GM12878 (cell line): ENCODE measurements at regions of chr16 and their contacts with region 1.

Region 1: DNA sequence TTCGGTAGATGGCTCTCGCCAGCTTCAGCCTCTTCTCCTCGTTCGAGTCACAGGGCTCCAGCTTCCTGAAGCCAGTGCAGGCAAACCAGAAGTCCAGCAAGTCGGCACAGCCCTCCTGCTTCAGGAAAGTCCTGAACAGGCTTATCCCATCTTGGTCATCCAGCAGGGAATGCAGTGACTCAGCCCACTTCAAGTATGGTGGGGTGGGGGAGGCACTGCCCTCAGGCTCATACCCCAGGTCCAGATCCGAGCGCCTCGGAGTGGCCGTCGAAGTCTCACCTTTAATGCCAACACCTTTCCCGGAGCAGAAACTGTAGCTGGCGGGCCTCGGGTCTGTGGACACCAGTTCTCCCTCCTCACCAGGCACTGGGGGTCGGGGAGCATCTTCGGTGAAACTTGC is 5.9 kb downstream of the AXIN1 start:
- DNase-seq: no peak
- ATAC-seq: no peak
- H3K4me3 ChIP-seq: no peak overlapping the region
- H3K27ac ChIP-seq: no peak overlapping the region
- H3K4me1 ChIP-seq: peaks cover 21% of the 10 kb centered on the region
- H3K27me3 ChIP-seq: no peaks in the 10 kb centered on the region
- CTCF ChIP-seq: no peak
- EP300 ChIP-seq: no peak
- POLR2A ChIP-seq: no peak
- RAD21 ChIP-seq: no peak

Region 2: GRCh38 chr16:228818-229730 is 117.5 kb before region 1 on chr16 and contains the start of gene LUC7L:
- CTCF ChIA-PET with region 1: interaction called, 20 read pairs
- POLR2A ChIA-PET with region 1: interaction called, 11 read pairs
- RAD21 ChIA-PET with region 1: interaction called, 28 read pairs
- SMC1A ChIA-PET with region 1: interaction called, 11 read pairs
- in situ Hi-C with region 1: loop called (anchors 5 kb)
- intact Hi-C with region 1: loop called (anchors 2 kb)
- DNase-seq: peak; percentile 40
- ATAC-seq: peak; percentile 97
- H3K4me3 ChIP-seq: peak within 1 kb of the TSS; percentile 82
- H3K27ac ChIP-seq: peak within 1 kb of the TSS; percentile 79
- H3K4me1 ChIP-seq: peaks cover 8% of the 10 kb centered on the region
- H3K27me3 ChIP-seq: no peaks in the 10 kb centered on the region
- CTCF ChIP-seq: no peak
- EP300 ChIP-seq: no peak
- POLR2A ChIP-seq: peak; percentile 100
- RAD21 ChIP-seq: no peak
- polyA plus RNA-seq, gene LUC7L: 2.3 to 10.9 TPM

Region 3: GRCh38 chr16:234468-235305 is 111.9 kb before region 1 on chr16 and contains the start of gene FAM234A:
- CTCF ChIA-PET with region 1: interaction called, 20 read pairs
- POLR2A ChIA-PET with region 1: interaction called, 33 read pairs
- RAD21 ChIA-PET with region 1: interaction called, 28 read pairs
- SMC1A ChIA-PET with region 1: interaction called, 5 read pairs
- in situ Hi-C with region 1: loop called (anchors 5 kb)
- intact Hi-C with region 1: loop called (anchors 2 kb)
- DNase-seq: peak; percentile 77
- ATAC-seq: peak; percentile 96
- H3K4me3 ChIP-seq: peak within 1 kb of the TSS; percentile 81
- H3K27ac ChIP-seq: peak within 1 kb of the TSS; percentile 84
- H3K4me1 ChIP-seq: peaks cover 2% of the 10 kb centered on the region; the same call in 1 of the 2 replicates
- H3K27me3 ChIP-seq: no peaks in the 10 kb centered on the region
- CTCF ChIP-seq: peak; percentile 37 to 62 (median 55)
- EP300 ChIP-seq: 0 out of 4 replicates have a peak, but pooled peaks of 1 of the 2 experiments have one; percentile 14
- POLR2A ChIP-seq: peak; percentile 87
- RAD21 ChIP-seq: 0 out of 2 replicates have a peak, but pooled peaks have one; percentile 16
- polyA plus RNA-seq, gene FAM234A: 1.6 TPM

Region 4: DNA sequence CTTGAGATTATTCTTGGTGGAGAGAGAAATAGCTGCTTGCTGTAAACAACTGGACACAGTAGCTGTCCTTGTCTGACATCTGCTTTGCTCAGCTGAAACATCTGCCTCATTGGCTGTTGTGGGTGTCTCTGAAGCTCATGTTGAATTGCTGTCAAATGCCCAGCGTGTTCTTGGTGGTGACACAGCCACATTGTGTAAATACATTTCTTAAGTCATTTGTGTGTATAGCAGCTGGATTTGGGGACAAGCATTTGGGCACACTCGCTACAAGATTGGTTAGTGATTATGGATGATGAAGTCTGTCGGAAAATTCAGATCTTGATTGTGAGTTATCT is 106.7 kb before region 1 on chr16:
- CTCF ChIA-PET with region 1: interaction called, 10 read pairs
- POLR2A ChIA-PET with region 1: interaction called, 33 read pairs
- RAD21 ChIA-PET with region 1: interaction called, 28 read pairs
- SMC1A ChIA-PET with region 1: interaction called, 5 read pairs
- in situ Hi-C with region 1: no loop called
- intact Hi-C with region 1: loop called (anchors 2 kb)
- DNase-seq: no peak
- ATAC-seq: no peak
- H3K4me3 ChIP-seq: no peak overlapping the region
- H3K27ac ChIP-seq: peak overlapping the region; percentile 5; the same call in 1 of the 2 replicates
- H3K4me1 ChIP-seq: peaks cover 23% of the 10 kb centered on the region
- H3K27me3 ChIP-seq: no peaks in the 10 kb centered on the region
- CTCF ChIP-seq: no peak
- EP300 ChIP-seq: no peak
- POLR2A ChIP-seq: no peak
- RAD21 ChIP-seq: no peak